ENCODE measurements at regions of chr17 and their contacts with region 1.

Region 1: GRCh38 chr17:68759343-68760132 is 158.4 kb upstream of the FAM20A start:
- DNase-seq: peak; percentile 92 to 97
- H3K4me3 ChIP-seq: no peak overlapping the region
- CTCF ChIP-seq: peak in 1 of 3 donors; percentile 93
- POLR2A ChIP-seq: no peak

Region 2: DNA sequence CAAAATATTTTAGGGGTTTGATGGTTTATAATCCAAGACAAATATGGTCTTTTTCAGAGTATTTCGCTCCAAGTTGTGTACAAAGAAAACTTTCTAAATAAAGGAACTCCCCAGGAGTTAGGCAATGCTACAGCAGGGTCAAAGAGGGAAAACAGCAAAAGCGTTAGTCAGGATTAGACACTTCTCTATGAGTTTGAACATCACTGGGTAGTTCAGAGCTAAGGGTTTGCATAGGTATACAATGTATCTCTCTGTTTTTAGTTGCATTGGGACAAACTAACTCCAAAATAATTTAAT is 193.1 kb before region 1 on chr17:
- intact Hi-C with region 1: loop called (anchors 10 kb)
- DNase-seq: no peak
- H3K4me3 ChIP-seq: no peak overlapping the region
- CTCF ChIP-seq: no peak
- POLR2A ChIP-seq: no peak

Region 3: DNA sequence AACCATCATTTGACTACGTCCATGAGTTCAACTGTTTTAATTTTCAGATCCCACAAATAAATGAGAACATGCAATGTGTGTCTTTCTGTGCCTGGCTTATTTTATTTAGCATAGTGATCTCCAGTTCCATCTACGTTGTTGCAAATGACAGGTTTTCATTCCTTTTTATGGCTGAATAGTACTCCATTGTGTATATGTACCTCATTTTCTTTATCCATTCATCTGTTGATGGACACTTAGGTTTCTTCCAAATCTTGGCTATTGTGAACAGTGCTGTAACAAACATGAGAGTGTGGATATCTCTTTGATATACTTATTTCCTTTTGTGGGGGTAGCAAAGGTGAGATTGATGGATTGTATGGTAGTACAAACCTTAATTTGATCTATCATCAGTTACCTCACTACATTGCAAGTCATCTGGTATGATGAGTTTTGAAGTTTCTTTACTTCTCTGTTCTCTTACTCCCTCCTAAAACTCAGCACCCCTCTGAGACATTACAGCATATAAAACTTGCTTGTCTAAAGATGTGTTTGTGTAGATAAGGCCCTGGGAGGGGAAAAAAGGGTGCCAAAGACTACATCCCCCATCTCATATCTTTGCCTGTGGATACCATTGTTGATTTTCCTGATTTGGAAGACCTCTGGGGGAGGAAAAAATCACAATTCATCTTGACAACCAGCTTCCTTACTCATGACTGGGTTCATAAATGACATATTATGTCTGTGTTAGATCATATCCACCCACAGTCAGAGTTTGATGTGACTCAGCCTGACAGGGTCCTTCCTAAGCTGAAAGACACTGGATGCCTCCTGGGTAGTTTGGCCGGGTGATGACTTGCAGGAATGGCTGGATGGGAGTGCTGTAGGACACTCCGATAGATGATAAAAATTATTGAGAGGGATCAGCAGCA is 253.6 kb after region 1 on chr17:
- intact Hi-C with region 1: no loop called
- DNase-seq: no peak
- H3K4me3 ChIP-seq: no peak overlapping the region
- CTCF ChIP-seq: no peak
- POLR2A ChIP-seq: no peak

Measured in lower leg skin (tissue), 4 donors.